ENCODE measurements at regions of chr11 and their contacts with region 1.

Region 1: GRCh38 chr11:75547580-75548058 is 14.4 kb upstream of the SERPINH1 start:
- DNase-seq: no peak
- H3K4me3 Mint-ChIP-seq: no peak overlapping the region
- H3K27ac Mint-ChIP-seq: no peak overlapping the region
- H3K4me1 Mint-ChIP-seq: no peaks in the 10 kb centered on the region
- H3K27me3 Mint-ChIP-seq: peaks cover 7% of the 10 kb centered on the region

Region 2: DNA sequence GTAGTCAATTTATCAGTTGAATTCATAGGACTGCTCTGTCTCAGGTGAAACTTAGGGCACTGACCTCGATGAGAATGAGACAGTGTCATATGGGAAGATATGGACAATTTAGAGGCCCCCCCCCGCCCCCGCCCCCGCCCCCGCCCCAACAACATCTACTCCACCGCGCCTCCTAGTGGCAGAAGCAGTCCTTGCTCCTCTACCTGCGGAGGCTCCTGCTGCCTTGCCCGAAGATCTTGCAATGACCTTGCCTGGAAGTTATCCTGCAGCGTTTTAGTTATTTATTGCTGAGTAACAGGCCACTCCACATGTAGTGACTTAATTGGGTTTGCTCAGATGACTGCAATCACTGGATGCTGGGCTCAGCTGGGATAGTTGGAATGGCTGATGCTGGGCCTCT is 29.6 kb after region 1 on chr11:
- intact Hi-C with region 1: loop called (anchors 2 kb)
- DNase-seq: peak; percentile 31
- H3K4me3 Mint-ChIP-seq: no peak overlapping the region
- H3K27ac Mint-ChIP-seq: no peak overlapping the region
- H3K4me1 Mint-ChIP-seq: peaks cover 1% of the 10 kb centered on the region
- H3K27me3 Mint-ChIP-seq: peaks cover 19% of the 10 kb centered on the region

Measured in activated T-helper 2 cell treated with anti-CD3 and anti-CD28 coated beads, Interferon-gamma antibody, Interleukin-2, Interleukin-4, amounts not matched to agents 10 μg/mL and 5 μg/mL and 100 μg/mL, durations not matched to agents 14 hours and 24 hours and 36 hours (primary cell).